Ovary (tissue), 10 donors: ENCODE measurements at regions of chr6 and their contacts with region 1.

Region 1: GRCh38 chr6:26607434-26608230 is 10.9 kb downstream of the ABT1 start:
- DNase-seq: no peak
- H3K4me3 ChIP-seq: no peak overlapping the region
- H3K27ac ChIP-seq: no peak overlapping the region
- H3K4me1 ChIP-seq: no peaks in the 10 kb centered on the region
- H3K27me3 ChIP-seq: no peaks in the 10 kb centered on the region
- CTCF ChIP-seq: no peak
- EP300 ChIP-seq: no peak
- POLR2A ChIP-seq: no peak

Region 2: GRCh38 chr6:25270559-25270958 is 1337.1 kb before region 1 on chr6:
- intact Hi-C with region 1: loop called in 1 of 4 experiments (anchors 5 kb)
- DNase-seq: no peak
- H3K4me3 ChIP-seq: no peak overlapping the region
- H3K27ac ChIP-seq: no peak overlapping the region
- H3K4me1 ChIP-seq: no peaks in the 10 kb centered on the region
- H3K27me3 ChIP-seq: no peaks in the 10 kb centered on the region
- CTCF ChIP-seq: no peak
- EP300 ChIP-seq: no peak
- POLR2A ChIP-seq: no peak

Region 3: GRCh38 chr6:27078734-27079357 is 471.2 kb after region 1 on chr6:
- intact Hi-C with region 1: loop called in 1 of 4 experiments (anchors 5 kb)
- DNase-seq: peak in 2 of 5 donors; percentile 8 to 18
- H3K4me3 ChIP-seq: no peak overlapping the region
- H3K27ac ChIP-seq: no peak overlapping the region
- H3K4me1 ChIP-seq: peaks cover 2% of the 10 kb centered on the region
- H3K27me3 ChIP-seq: no peaks in the 10 kb centered on the region
- CTCF ChIP-seq: no peak
- EP300 ChIP-seq: no peak
- POLR2A ChIP-seq: no peak